ENCODE measurements at regions of chr17 and their contacts with region 1.

Region 1: GRCh38 chr17:10226930-10227685 is 28.7 kb upstream of the GAS7 start:
- DNase-seq: peak; percentile 38 to 53
- ATAC-seq: peak; percentile 61 to 79 (median 76)
- H3K4me3 ChIP-seq: no peak overlapping the region
- H3K27ac ChIP-seq: no peak overlapping the region
- H3K4me1 ChIP-seq: no peaks in the 10 kb centered on the region
- H3K27me3 ChIP-seq: no peaks in the 10 kb centered on the region
- CTCF ChIP-seq: peak; percentile 62 to 93 (median 74)

Region 2: GRCh38 chr17:8621585-8621984 is 1605.5 kb before region 1 on chr17:
- intact Hi-C with region 1: no loop called
- DNase-seq: no peak
- ATAC-seq: peak in 3 of 8 donors; percentile 14 to 78 (median 28)
- H3K4me3 ChIP-seq: no peak overlapping the region
- H3K27ac ChIP-seq: no peak overlapping the region
- H3K4me1 ChIP-seq: peaks cover 0 to 24% (median 5%) of the 10 kb centered on the region in 9 donors
- H3K27me3 ChIP-seq: peaks cover 0 to 9% (median 0%) of the 10 kb centered on the region in 7 donors
- CTCF ChIP-seq: no peak

Region 3: GRCh38 chr17:9924735-9925191 is 302.3 kb before region 1 on chr17:
- intact Hi-C with region 1: loop called in 2 of 10 experiments (anchors 5 to 10 kb)
- DNase-seq: no peak
- ATAC-seq: peak in 6 of 8 donors; percentile 39 to 70 (median 59)
- H3K4me3 ChIP-seq: no peak overlapping the region
- H3K27ac ChIP-seq: no peak overlapping the region
- H3K4me1 ChIP-seq: peaks cover 0 to 4% (median 0%) of the 10 kb centered on the region in 9 donors
- H3K27me3 ChIP-seq: no peaks in the 10 kb centered on the region
- CTCF ChIP-seq: peak; percentile 75 to 86 (median 83)

Region 4: DNA sequence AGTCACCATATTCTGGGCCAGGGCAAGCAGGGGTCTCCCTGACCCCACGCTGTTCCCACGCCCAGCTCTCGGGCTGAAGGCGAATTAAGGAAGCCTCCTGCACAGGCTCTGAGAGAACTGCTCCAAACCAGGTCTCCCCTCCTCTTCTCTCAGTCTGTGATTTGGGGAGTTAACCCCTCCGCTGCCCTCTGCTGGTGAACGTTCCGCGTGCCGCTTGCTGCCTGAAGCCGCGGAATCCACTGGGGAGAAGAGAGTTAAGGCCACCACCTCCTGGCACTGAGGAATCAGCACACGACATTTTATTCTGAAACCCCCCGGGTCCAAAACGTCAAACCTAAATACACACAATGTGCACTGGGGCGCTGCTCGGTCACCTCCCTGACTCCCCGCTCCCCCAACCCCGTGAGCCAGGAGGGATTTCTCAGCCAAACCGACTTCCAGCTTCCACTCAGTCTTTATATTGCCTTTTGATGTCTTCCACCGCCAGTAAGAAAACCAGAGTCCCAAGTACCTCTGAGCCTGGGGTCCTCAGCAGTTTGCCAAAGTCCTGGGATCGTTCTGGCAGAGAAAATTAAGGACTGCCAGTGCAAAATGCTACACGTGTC is 267.6 kb before region 1 on chr17:
- intact Hi-C with region 1: loop called in 2 of 10 experiments (anchors 2 kb)
- DNase-seq: peak in 1 of 2 donors; percentile 42
- ATAC-seq: peak in 4 of 8 donors; percentile 20 to 28 (median 22)
- H3K4me3 ChIP-seq: no peak overlapping the region
- H3K27ac ChIP-seq: no peak overlapping the region
- H3K4me1 ChIP-seq: peaks cover 0 to 12% (median 6%) of the 10 kb centered on the region in 9 donors
- H3K27me3 ChIP-seq: peaks cover 0 to 6% (median 0%) of the 10 kb centered on the region in 7 donors
- CTCF ChIP-seq: peak in 8 of 9 donors; percentile 8 to 58 (median 46)

Region 5: GRCh38 chr17:9968902-9969617 is 258.0 kb before region 1 on chr17:
- intact Hi-C with region 1: loop called in 9 of 10 experiments (anchors 2 to 5 kb)
- DNase-seq: no peak
- ATAC-seq: no peak
- H3K4me3 ChIP-seq: no peak overlapping the region
- H3K27ac ChIP-seq: no peak overlapping the region
- H3K4me1 ChIP-seq: peaks cover 1 to 62% (median 25%) of the 10 kb centered on the region in 9 donors
- H3K27me3 ChIP-seq: no peaks in the 10 kb centered on the region
- CTCF ChIP-seq: no peak

Region 6: DNA sequence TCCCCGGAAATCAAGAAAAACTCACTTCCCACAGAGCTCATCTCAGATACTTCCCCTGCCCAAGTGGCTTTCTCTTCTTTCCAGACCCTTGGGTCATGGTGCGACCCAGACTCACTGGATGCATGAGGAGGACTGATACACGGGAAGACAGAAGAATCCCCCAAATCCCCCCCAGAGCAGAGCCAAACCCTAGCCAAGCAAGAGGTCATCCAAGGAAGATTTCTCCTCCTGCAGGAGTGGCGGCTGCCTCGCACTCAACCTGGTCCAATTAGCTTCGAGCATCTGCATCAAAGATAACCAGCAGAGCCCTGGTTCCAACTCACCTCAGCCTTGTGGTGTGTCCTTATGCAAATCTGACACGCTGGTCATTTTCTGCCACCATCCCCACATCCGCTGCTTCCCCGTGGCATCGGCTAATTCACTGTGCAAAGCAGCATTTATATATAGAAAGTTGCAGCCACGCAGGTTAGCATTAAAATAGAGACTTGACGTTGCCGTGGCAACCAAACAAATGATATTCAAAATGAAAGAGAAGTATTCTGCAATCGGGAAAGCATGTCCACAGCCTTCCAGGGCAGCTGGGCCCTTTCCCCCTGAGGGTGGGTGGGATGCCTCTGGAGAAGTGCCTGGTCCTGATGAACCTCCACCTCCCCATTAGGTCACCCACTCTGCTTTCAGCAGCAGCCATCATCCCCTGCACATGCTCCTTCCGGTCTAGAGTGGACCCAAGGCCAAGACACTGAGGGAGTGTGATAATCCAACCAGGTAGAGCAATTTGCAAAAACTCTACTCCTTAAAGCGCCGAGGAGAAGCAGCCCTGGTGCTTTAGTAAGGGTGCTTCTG is 167.5 kb before region 1 on chr17:
- intact Hi-C with region 1: no loop called
- DNase-seq: peak; percentile 60 to 70
- ATAC-seq: peak; percentile 46 to 79 (median 75)
- H3K4me3 ChIP-seq: peak overlapping the region in 1 of 10 donors; percentile 5
- H3K27ac ChIP-seq: peak overlapping the region in 8 of 10 donors; percentile 44 to 80 (median 67)
- H3K4me1 ChIP-seq: peaks cover 4 to 72% (median 39%) of the 10 kb centered on the region in 9 donors
- H3K27me3 ChIP-seq: no peaks in the 10 kb centered on the region
- CTCF ChIP-seq: no peak

Region 7: GRCh38 chr17:10115071-10115539 is 112.0 kb before region 1 on chr17:
- intact Hi-C with region 1: loop called in 1 of 10 experiments (anchors 10 kb)
- DNase-seq: peak; percentile 89 to 91
- ATAC-seq: peak; percentile 88 to 93 (median 90)
- H3K4me3 ChIP-seq: peak overlapping the region in 9 of 10 donors; percentile 5 to 43 (median 33)
- H3K27ac ChIP-seq: peak overlapping the region; percentile 84 to 97 (median 92)
- H3K4me1 ChIP-seq: peaks cover 6 to 83% (median 58%) of the 10 kb centered on the region in 9 donors
- H3K27me3 ChIP-seq: no peaks in the 10 kb centered on the region
- CTCF ChIP-seq: no peak